ENCODE measurements at regions of chr2 and their contacts with region 1.

Region 1: DNA sequence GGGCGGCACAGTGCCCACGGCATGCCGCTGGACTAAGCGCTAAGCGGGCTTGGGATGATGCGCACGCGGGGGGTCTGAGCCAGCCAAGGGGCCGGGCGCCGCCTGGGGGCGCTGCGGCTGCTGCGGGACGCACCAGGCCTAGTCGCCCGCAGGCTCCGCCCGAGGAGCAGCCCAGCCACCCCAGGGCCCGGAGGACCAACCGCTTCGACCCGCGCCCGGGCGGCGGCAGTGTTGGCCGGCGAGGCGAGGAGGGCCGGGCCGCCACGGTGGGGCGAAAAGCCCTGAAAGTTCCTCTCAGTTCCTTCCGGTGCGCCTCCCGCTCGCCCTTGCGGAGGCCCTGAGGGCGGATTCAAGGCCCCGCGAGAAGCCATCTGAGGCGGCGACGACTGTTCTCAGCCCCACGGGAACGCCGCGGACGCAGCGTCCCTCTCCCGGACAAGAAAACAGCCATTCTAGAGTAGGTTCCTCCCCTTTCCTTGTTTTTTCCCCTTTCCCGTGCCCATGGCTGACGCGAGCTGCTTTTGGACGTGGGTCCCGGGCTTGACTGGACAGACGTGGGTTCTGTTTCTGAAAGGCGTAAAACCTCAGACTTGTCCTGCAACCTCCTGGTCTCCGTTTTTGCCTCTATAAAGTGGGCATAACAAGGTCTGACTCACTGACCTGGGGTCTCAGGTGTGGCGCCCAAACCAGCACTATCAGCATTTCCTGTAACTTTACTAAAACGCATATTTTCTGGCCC is at the start of gene ANKAR:
- DNase-seq: peak; percentile 62
- H3K4me3 Mint-ChIP-seq: peak within 1 kb of the TSS; percentile 86
- H3K27ac Mint-ChIP-seq: peak within 1 kb of the TSS; percentile 95
- H3K4me1 Mint-ChIP-seq: peaks cover 5% of the 10 kb centered on the region
- H3K27me3 Mint-ChIP-seq: no peaks in the 10 kb centered on the region
- CTCF ChIP-seq: peak; percentile 75
- total RNA-seq, gene ANKAR: 4.6 and 5.1 TPM in 2 replicates

Region 2: DNA sequence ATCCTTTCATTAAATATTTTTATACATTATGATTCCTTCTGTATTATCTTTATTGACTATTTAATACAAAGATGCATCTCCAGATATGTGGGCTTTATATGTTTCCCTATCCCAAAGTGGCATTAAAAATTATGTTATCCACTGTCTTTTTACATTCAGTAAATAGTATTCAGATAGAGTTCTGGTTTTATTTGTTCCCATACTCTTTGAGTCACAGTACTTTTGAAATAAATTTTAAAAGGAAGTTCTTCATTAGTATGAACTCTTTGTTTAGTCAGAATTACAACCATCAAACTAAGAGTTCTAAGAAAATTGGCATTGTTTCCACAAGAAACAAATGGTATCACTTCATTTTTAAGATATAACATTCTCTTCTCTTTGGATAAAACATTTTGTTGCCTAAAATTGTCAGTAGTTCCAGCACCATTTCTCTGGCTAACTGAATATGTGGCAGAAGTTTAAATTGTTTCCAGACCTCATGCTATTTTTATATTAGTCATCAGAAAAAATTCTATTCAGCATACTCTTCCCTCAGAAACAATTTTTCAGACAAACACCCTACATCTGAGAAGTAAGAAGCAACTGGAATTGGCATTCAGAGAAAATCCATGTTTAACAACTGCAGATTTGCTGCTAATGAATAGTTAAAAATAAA is 406.5 kb before region 1 on chr2:
- CTCF ChIA-PET with region 1: no interaction called
- POLR2A ChIA-PET with region 1: no interaction called
- intact Hi-C with region 1: no loop called
- DNase-seq: no peak
- H3K4me3 Mint-ChIP-seq: no peak overlapping the region
- H3K27ac Mint-ChIP-seq: peak overlapping the region; percentile 66
- H3K4me1 Mint-ChIP-seq: no peaks in the 10 kb centered on the region
- H3K27me3 Mint-ChIP-seq: no peaks in the 10 kb centered on the region
- CTCF ChIP-seq: no peak

Region 3: GRCh38 chr2:189369566-189369965 is 305.0 kb before region 1 on chr2:
- CTCF ChIA-PET with region 1: no interaction called
- POLR2A ChIA-PET with region 1: no interaction called
- intact Hi-C with region 1: no loop called
- DNase-seq: peak; percentile 66
- H3K4me3 Mint-ChIP-seq: no peak overlapping the region
- H3K27ac Mint-ChIP-seq: no peak overlapping the region
- H3K4me1 Mint-ChIP-seq: peaks cover 8% of the 10 kb centered on the region
- H3K27me3 Mint-ChIP-seq: no peaks in the 10 kb centered on the region
- CTCF ChIP-seq: no peak

Region 4: GRCh38 chr2:189641590-189641989 is 33.0 kb before region 1 on chr2:
- CTCF ChIA-PET with region 1: no interaction called
- POLR2A ChIA-PET with region 1: no interaction called
- intact Hi-C with region 1: no loop called
- DNase-seq: no peak
- H3K4me3 Mint-ChIP-seq: no peak overlapping the region
- H3K27ac Mint-ChIP-seq: no peak overlapping the region
- H3K4me1 Mint-ChIP-seq: no peaks in the 10 kb centered on the region
- H3K27me3 Mint-ChIP-seq: no peaks in the 10 kb centered on the region
- CTCF ChIP-seq: no peak

Region 5: GRCh38 chr2:189698020-189698887 is 23.7 kb after region 1 on chr2:
- CTCF ChIA-PET with region 1: interaction called, 19 read pairs
- POLR2A ChIA-PET with region 1: interaction called, 6 read pairs
- intact Hi-C with region 1: loop called (anchors 2 kb)
- DNase-seq: peak; percentile 54
- H3K4me3 Mint-ChIP-seq: no peak overlapping the region
- H3K27ac Mint-ChIP-seq: no peak overlapping the region
- H3K4me1 Mint-ChIP-seq: no peaks in the 10 kb centered on the region
- H3K27me3 Mint-ChIP-seq: no peaks in the 10 kb centered on the region
- CTCF ChIP-seq: peak; percentile 45